ENCODE measurements at regions of chr1 and their contacts with region 1.

Region 1: GRCh38 chr1:178501705-178502329 is 5.1 kb upstream of the CLEC20A start:
- DNase-seq: peak; percentile 85
- H3K4me3 Mint-ChIP-seq: no peak overlapping the region
- H3K27ac Mint-ChIP-seq: no peak overlapping the region
- H3K4me1 Mint-ChIP-seq: no peaks in the 10 kb centered on the region
- H3K27me3 Mint-ChIP-seq: no peaks in the 10 kb centered on the region
- CTCF ChIP-seq: peak; percentile 98

Region 2: DNA sequence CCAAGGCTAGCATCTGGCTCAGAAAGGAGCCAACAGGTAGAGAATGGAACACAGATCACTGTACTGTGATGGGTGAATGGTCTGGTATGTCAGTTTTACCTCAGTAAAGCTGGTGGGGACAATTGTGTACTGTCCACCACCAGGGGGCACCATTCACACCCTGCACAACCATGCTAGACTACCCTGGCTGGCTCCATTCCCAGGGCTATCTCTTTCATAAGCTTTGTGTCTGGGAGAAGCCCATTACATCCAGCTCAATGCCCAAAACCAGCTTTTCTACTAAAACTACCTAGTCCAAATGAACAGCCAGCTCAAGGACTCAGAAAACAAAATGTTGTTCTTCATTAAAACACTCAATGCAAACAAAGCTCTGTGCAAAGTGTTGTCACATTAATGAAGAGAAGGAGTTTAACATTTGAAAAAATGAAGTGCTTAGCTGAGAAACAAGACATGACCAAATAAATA is 469.9 kb before region 1 on chr1:
- CTCF ChIA-PET with region 1: interaction called, 6 read pairs
- POLR2A ChIA-PET with region 1: no interaction called
- intact Hi-C with region 1: loop called (anchors 1 kb)
- DNase-seq: peak; percentile 97
- H3K4me3 Mint-ChIP-seq: no peak overlapping the region
- H3K27ac Mint-ChIP-seq: no peak overlapping the region
- H3K4me1 Mint-ChIP-seq: no peaks in the 10 kb centered on the region
- H3K27me3 Mint-ChIP-seq: no peaks in the 10 kb centered on the region
- CTCF ChIP-seq: peak; percentile 92

Region 3: GRCh38 chr1:178324003-178324402 is 177.8 kb before region 1 on chr1:
- CTCF ChIA-PET with region 1: interaction called, 19 read pairs
- POLR2A ChIA-PET with region 1: interaction called, 4 read pairs
- intact Hi-C with region 1: no loop called
- DNase-seq: peak; percentile 44
- H3K4me3 Mint-ChIP-seq: no peak overlapping the region
- H3K27ac Mint-ChIP-seq: no peak overlapping the region
- H3K4me1 Mint-ChIP-seq: peaks cover 19% of the 10 kb centered on the region
- H3K27me3 Mint-ChIP-seq: no peaks in the 10 kb centered on the region
- CTCF ChIP-seq: no peak

Region 4: DNA sequence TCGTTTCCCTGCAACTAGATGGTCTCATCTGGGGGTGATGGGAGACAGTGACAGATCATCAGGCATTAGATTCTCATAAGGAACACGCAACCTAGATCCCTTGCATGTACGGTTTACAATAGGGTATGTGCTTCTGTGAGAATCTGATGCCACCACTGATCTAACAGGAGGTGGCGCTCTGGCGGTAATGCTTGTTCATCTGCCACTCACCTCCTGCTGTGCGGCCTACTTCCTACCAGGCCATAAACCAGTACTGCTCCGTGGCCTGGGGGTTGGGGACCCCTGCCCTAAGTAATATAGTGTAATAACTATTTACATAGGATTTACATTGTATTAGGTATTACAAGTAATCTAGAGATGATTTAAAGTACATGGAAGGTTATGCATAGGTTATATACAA is 140.0 kb before region 1 on chr1:
- CTCF ChIA-PET with region 1: interaction called, 10 read pairs
- POLR2A ChIA-PET with region 1: no interaction called
- intact Hi-C with region 1: no loop called
- DNase-seq: peak; percentile 28
- H3K4me3 Mint-ChIP-seq: no peak overlapping the region
- H3K27ac Mint-ChIP-seq: no peak overlapping the region
- H3K4me1 Mint-ChIP-seq: peaks cover 15% of the 10 kb centered on the region
- H3K27me3 Mint-ChIP-seq: no peaks in the 10 kb centered on the region
- CTCF ChIP-seq: no peak

Region 5: DNA sequence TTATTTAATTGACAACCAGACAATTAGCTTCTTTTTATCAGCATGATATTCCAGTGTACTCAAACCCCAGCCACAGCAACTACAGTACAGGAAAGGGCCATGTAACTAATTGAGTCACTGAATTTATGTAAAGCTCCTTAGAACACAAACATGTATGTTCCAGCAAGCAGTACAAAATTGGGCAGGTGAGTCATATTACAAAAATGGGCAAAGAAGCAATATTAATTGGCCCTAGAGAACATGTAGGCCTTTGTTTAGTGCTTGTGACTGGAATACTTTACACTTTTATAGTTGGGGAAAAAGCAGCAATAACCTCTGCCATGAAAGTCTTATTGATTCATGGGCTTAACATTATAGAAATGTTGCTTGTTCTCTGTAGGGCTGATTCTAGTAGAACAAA is 36.8 kb before region 1 on chr1:
- CTCF ChIA-PET with region 1: interaction called, 82 read pairs
- POLR2A ChIA-PET with region 1: interaction called, 4 read pairs
- intact Hi-C with region 1: no loop called
- DNase-seq: peak; percentile 74
- H3K4me3 Mint-ChIP-seq: peak overlapping the region; percentile 2
- H3K27ac Mint-ChIP-seq: peak overlapping the region; percentile 73
- H3K4me1 Mint-ChIP-seq: peaks cover 27% of the 10 kb centered on the region
- H3K27me3 Mint-ChIP-seq: no peaks in the 10 kb centered on the region
- CTCF ChIP-seq: no peak

Region 6: DNA sequence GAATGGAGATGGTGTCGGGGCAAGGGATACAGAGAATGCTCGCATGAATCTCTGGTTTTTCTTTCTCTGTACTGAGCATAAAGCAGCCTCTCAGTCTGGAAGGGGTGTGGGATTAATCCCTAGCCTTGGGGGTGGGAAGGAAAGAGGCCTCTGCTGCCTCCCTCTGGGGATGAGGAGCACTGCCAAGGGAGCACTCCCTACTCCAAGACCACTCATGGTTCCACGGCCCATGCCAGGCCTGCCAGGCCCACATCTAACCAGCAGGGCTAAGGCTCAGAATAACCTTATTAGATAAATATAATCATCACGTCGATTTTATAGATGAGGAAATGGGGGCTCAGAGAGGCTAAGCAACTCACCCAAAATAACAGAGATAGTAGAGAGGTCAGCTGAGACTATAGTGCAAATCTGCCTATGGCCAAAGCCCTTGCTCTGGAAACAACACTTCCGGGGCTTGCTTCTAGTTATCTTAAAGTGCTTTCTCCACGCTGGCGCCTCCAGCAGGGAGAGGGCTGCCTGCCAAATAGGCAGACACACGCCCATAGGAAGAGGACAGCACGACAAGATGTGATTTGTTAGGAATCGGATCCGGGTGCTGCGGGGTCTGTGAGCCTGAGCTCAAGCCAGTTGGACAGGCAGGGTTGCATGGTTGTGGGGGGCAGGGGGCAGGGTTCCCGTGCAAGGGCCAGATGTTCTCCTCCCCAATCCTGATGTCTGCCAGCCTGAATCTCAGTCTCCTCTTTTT is 11.6 kb after region 1 on chr1:
- CTCF ChIA-PET with region 1: interaction called, 162 read pairs
- POLR2A ChIA-PET with region 1: no interaction called
- intact Hi-C with region 1: no loop called
- DNase-seq: no peak
- H3K4me3 Mint-ChIP-seq: no peak overlapping the region
- H3K27ac Mint-ChIP-seq: no peak overlapping the region
- H3K4me1 Mint-ChIP-seq: no peaks in the 10 kb centered on the region
- H3K27me3 Mint-ChIP-seq: no peaks in the 10 kb centered on the region
- CTCF ChIP-seq: no peak

Measured in MCF 10A (cell line).